Activated T-helper 1 cell treated with anti-CD3 and anti-CD28 coated beads, Interleukin-12 subunit alpha, Interleukin-12 subunit beta, Interleukin-2, Interleukin-4 antibody, amounts not matched to agents 30 ng/mL and 10 ng/mL and 1 ng/mL, durations not matched to agents 14 hours and 24 hours and 36 hours (primary cell): ENCODE measurements at regions of chr4 and their contacts with region 1.

Region 1: DNA sequence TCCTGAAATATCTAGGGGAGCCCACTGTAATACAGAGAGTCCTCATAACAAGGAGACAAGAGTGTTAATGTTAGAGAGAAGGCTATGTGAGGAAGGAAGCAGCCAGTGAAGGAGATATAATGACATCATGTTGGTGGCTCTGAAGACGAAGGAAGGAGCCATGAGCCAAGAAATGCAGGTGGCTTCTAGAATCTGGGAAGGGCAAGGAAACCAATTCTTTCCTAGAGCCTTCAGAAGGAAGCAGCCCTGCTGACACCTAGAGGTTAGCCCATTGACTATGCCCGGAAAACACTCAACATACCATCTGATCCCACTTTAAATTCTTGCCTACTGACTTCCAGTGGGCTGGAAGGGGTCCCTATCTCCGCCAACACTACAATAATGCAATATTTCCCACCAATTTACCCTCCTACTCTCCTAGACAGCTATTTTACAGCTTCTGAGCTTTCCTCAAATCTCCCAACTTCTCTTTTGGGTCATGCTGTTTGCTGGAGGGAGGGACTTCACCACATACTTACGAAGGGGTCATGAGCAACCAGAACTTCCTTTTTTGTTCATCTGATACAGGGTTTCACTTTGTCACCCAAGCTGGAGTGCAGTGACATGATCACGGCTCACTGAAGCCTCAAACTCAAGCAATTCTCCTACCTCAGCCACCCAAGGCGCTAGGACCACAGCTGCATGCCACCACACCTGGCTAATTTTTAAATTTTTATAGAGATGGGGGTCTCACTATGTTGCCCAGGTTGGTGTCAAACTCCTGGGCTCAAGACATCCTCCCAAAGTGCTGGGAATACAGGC is 25.2 kb upstream of the G3BP2 start:
- DNase-seq: no peak
- H3K4me3 Mint-ChIP-seq: peak overlapping the region; percentile 7
- H3K27ac Mint-ChIP-seq: peak overlapping the region; percentile 86
- H3K4me1 Mint-ChIP-seq: peaks cover 30% of the 10 kb centered on the region
- H3K27me3 Mint-ChIP-seq: no peaks in the 10 kb centered on the region

Region 2: GRCh38 chr4:75630174-75630936 is 68.0 kb before region 1 on chr4 and contains the start of gene CDKL2:
- intact Hi-C with region 1: no loop called
- DNase-seq: peak; percentile 89
- H3K4me3 Mint-ChIP-seq: peak within 1 kb of the TSS; percentile 86
- H3K27ac Mint-ChIP-seq: peak within 1 kb of the TSS; percentile 40
- H3K4me1 Mint-ChIP-seq: peaks cover 20% of the 10 kb centered on the region
- H3K27me3 Mint-ChIP-seq: peaks cover 11% of the 10 kb centered on the region
- total RNA-seq, gene CDKL2: 0.16 and 0.22 TPM in 2 replicates

Region 3: DNA sequence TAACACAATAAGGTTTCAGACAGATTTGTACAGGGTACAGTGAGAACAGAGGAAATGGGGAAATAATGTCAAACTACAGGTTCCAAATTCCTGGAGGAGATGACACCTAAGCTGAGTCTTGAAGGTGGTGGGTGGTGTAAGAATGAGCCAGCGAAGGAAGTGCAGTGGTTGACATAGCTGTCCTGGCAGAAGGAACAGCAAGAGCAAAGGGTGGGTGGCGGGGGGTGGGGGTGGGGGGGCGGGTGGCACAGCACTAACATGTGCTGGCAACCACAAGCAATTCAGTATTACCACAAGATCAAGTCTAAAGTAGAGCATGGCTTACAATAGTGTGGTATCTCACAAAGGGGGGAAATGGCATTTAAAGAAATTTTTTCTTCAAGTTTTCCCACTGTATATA is 12.0 kb before region 1 on chr4:
- intact Hi-C with region 1: loop called (anchors 1 kb)
- DNase-seq: no peak
- H3K4me3 Mint-ChIP-seq: no peak overlapping the region
- H3K27ac Mint-ChIP-seq: no peak overlapping the region
- H3K4me1 Mint-ChIP-seq: peaks cover 30% of the 10 kb centered on the region
- H3K27me3 Mint-ChIP-seq: peaks cover 2% of the 10 kb centered on the region

Region 4: GRCh38 chr4:75715105-75715799 is 16.9 kb after region 1 on chr4:
- intact Hi-C with region 1: loop called (anchors 2 kb)
- DNase-seq: no peak
- H3K4me3 Mint-ChIP-seq: no peak overlapping the region
- H3K27ac Mint-ChIP-seq: no peak overlapping the region
- H3K4me1 Mint-ChIP-seq: peaks cover 5% of the 10 kb centered on the region
- H3K27me3 Mint-ChIP-seq: no peaks in the 10 kb centered on the region

Region 5: DNA sequence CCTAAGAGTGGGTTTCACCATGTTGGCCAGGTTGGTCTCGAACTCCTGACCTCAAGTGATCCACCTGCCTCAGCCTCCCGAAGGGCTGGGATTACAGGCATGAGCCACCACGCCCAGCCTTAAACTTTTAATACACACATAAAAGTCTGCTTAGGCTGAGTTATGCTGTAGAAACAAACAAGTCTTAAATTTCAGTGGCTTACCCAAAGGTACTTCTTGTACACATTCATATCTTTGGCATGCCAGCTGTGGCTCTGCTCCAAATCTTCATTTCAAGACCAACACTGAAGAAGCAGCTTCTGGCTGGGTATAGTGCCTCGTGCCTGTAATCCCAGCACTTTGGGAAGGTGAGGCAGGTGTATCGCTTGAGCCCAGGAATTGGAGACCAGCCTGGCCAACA is 123.6 kb after region 1 on chr4:
- intact Hi-C with region 1: no loop called
- DNase-seq: no peak
- H3K4me3 Mint-ChIP-seq: no peak overlapping the region
- H3K27ac Mint-ChIP-seq: no peak overlapping the region
- H3K4me1 Mint-ChIP-seq: no peaks in the 10 kb centered on the region
- H3K27me3 Mint-ChIP-seq: no peaks in the 10 kb centered on the region